Mammary epithelial cell (primary cell): ENCODE measurements at regions of chr1 and their contacts with region 1.

Region 1: GRCh38 chr1:52404116-52404986 is at the starts of genes ORC1 and PRPF38A:
- DNase-seq: peak; percentile 94
- H3K4me3 ChIP-seq: peak within 1 kb of the TSS; percentile 75 to 87 (median 76)
- H3K27ac ChIP-seq: peak within 1 kb of the TSS; percentile 94
- H3K4me1 ChIP-seq: peaks cover 6% of the 10 kb centered on the region
- H3K27me3 ChIP-seq: no peaks in the 10 kb centered on the region
- CTCF ChIP-seq: peak; percentile 57 to 74
- total RNA-seq, gene ORC1: 1.2 to 8.8 TPM
- total RNA-seq, gene PRPF38A: 9.2 to 34.9 TPM

Region 2: DNA sequence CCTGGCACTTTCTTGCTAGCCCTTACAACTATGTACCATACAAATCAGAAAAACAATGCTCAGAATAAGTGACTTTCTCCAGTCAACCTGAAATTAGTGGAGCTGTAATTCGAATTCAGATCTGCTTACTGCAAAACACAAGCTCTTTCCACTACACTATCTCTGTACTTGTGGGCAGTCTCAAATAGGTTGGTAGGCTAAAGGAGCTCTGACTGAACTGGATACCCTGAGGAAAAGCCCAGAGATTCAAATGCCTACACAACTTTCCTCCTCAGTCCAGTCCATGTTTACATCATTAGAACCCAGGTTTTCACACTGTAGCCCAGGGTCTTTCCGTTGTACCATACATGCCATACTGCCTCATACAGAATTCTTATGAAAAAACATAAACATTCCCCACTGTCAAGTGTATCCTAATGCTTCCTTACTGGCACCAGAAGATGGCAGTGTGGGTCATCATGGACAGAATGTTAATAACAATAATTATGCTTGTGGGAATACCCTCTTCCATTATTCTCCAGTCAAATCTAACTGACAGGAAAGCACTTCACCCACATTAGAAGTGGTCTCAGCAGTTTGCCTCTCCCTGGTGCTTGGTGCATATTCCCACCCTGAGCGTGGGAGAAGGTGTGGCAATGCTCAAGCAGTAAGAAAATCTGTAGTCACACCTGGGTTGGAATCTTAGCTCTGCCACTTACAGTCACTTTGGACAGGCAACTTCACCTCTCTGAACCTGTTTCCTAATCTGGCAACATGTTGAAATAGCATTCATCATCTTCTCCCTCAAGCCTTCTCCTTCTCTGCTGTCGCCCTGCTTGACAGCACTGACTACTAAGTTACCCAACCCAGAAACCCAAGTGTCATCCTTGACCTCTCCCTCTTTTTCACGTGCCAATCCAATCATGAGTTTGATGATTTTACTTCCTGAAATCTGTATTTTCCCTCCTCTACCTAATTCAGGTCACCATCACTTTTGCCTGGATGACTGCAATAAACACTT is 276.9 kb before region 1 on chr1:
- CTCF ChIA-PET with region 1: interaction called, 3 read pairs
- dilution Hi-C with region 1: no loop called
- in situ Hi-C with region 1: no loop called
- intact Hi-C with region 1: loop called (anchors 1 kb)
- DNase-seq: peak; percentile 54
- H3K4me3 ChIP-seq: no peak overlapping the region
- H3K27ac ChIP-seq: no peak overlapping the region
- H3K4me1 ChIP-seq: peaks cover 5% of the 10 kb centered on the region
- H3K27me3 ChIP-seq: no peaks in the 10 kb centered on the region
- CTCF ChIP-seq: peak; percentile 77 to 86

Region 3: GRCh38 chr1:52141513-52142219 is 262.7 kb before region 1 on chr1 and contains the start of gene ZFYVE9:
- CTCF ChIA-PET with region 1: no interaction called
- dilution Hi-C with region 1: no loop called
- in situ Hi-C with region 1: no loop called
- intact Hi-C with region 1: loop called (anchors 5 kb)
- DNase-seq: peak; percentile 76
- H3K4me3 ChIP-seq: peak within 1 kb of the TSS; percentile 84 to 95 (median 94)
- H3K27ac ChIP-seq: peak within 1 kb of the TSS; percentile 95
- H3K4me1 ChIP-seq: peaks cover 33% of the 10 kb centered on the region
- H3K27me3 ChIP-seq: no peaks in the 10 kb centered on the region
- CTCF ChIP-seq: peak; percentile 61 to 65
- total RNA-seq, gene ZFYVE9: 35.4 to 42.0 TPM

Region 4: GRCh38 chr1:52365746-52366516 is 38.4 kb before region 1 on chr1 and contains the start of gene CC2D1B:
- CTCF ChIA-PET with region 1: no interaction called
- dilution Hi-C with region 1: no loop called
- in situ Hi-C with region 1: no loop called
- intact Hi-C with region 1: loop called (anchors 1 kb)
- DNase-seq: peak; percentile 98
- H3K4me3 ChIP-seq: peak within 1 kb of the TSS; percentile 46 to 89 (median 78)
- H3K27ac ChIP-seq: peak within 1 kb of the TSS; percentile 84
- H3K4me1 ChIP-seq: peaks cover 28% of the 10 kb centered on the region
- H3K27me3 ChIP-seq: no peaks in the 10 kb centered on the region
- CTCF ChIP-seq: peak in 1 of 2 donors; percentile 13
- total RNA-seq, gene CC2D1B: 28.1 to 31.0 TPM

Region 5: DNA sequence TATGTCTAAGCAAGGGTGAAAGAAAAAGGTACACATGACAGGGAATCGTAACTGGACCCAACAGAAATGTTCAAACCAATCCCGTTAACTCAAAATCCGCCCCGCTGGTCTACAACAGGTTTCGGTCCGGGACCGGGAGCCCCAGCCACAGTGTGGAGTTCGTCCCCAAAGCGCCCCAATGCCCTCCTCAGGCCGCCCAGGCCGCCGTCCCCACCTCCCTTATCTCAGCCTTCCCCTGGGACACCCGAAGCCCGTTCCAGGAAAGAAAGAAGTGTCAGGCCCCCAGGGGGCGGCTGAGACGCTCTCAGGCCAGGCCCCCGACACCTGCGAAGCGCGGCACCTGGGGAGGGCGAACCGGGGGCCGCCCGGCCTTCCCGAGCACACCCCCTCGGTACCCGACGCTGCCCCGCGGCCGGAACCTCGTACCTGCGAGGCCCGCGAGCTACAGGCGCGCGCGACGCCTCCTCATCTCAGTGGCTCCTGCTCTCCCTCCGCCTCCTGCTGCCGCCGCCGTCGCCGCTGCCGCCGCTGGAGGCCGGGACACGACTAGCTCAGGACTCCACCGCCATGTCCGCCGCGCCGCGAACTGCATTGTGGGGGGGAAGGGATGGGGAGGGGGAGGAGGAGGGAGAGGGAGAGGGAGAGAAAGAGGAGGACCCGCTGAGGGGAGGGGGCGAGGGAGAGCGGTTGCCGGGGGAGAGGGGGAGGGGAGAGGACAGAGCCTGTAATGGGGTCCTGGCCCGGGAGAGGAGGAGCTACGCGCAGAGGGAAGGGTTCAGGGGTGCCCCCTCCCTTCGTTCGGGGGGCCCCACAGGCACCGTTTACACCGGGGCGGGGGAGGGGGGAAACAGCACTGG is 148.4 kb after region 1 on chr1 and contains the start of gene TUT4:
- CTCF ChIA-PET with region 1: no interaction called
- dilution Hi-C with region 1: no loop called
- in situ Hi-C with region 1: no loop called
- intact Hi-C with region 1: loop called (anchors 2 kb)
- DNase-seq: peak; percentile 74
- H3K4me3 ChIP-seq: peak within 1 kb of the TSS; percentile 84 to 95 (median 89)
- H3K27ac ChIP-seq: peak within 1 kb of the TSS; percentile 95
- H3K4me1 ChIP-seq: peaks cover 24% of the 10 kb centered on the region
- H3K27me3 ChIP-seq: no peaks in the 10 kb centered on the region
- CTCF ChIP-seq: peak in 1 of 2 donors; percentile 9
- total RNA-seq, gene TUT4: 30.5 to 47.9 TPM

Region 6: GRCh38 chr1:52662645-52663313 is 258.4 kb after region 1 on chr1:
- CTCF ChIA-PET with region 1: no interaction called
- dilution Hi-C with region 1: loop called (anchors 25 kb)
- in situ Hi-C with region 1: loop called in 1 of 2 experiments (anchors 10 kb)
- intact Hi-C with region 1: loop called (anchors 1 kb)
- DNase-seq: peak; percentile 96
- H3K4me3 ChIP-seq: no peak overlapping the region
- H3K27ac ChIP-seq: peak overlapping the region; percentile 72
- H3K4me1 ChIP-seq: peaks cover 57% of the 10 kb centered on the region
- H3K27me3 ChIP-seq: no peaks in the 10 kb centered on the region
- CTCF ChIP-seq: peak in 1 of 2 donors; percentile 17

Region 7: GRCh38 chr1:52697795-52698674 is 293.7 kb after region 1 on chr1 and contains the start of gene COA7:
- CTCF ChIA-PET with region 1: no interaction called
- dilution Hi-C with region 1: no loop called
- in situ Hi-C with region 1: loop called in 1 of 2 experiments (anchors 25 kb)
- intact Hi-C with region 1: no loop called
- DNase-seq: peak; percentile 81
- H3K4me3 ChIP-seq: peak within 1 kb of the TSS; percentile 65 to 86 (median 66)
- H3K27ac ChIP-seq: peak within 1 kb of the TSS; percentile 64
- H3K4me1 ChIP-seq: peaks cover 10% of the 10 kb centered on the region
- H3K27me3 ChIP-seq: no peaks in the 10 kb centered on the region
- CTCF ChIP-seq: no peak
- total RNA-seq, gene COA7: 13.8 to 33.0 TPM